A673 (cell line): ENCODE measurements at regions of chr2 and their contacts with region 1.

Region 1: DNA sequence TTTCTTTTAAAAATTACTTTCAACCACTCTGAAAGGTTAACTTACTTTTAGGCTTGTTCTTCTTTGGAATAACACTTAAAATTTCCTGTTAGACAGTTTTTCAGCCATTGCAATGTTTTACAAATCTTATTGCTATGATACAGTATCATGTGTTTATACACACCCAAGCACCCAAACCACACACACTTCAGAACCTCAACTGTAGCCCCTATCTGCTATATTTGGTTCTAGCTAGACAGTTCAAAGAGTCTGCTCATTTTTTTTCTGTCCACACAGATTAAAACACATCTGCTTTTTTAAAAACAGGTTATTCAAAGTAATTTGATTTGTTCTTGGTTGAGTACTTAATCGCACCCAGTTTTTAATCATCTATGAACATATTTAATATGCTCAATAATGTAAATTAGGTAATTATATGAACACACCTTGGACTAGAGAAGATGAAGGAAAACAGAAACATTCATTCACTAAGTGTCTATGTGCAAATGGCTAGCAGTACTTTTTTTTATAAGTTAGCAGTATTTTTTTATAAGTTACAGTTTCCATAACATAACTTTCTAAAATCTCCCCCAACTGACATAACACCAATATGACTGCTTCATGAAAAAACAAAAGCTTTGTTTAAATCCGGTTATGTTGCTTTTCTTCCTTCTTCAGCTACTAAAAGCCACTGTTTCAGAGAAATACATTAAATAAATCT is 17.6 kb downstream of the FBXO11 start:
- DNase-seq: no peak
- H3K4me3 ChIP-seq: no peak overlapping the region
- H3K27ac ChIP-seq: no peak overlapping the region
- H3K4me1 ChIP-seq: peaks cover 6% of the 10 kb centered on the region
- H3K27me3 ChIP-seq: no peaks in the 10 kb centered on the region
- CTCF ChIP-seq: no peak

Region 2: GRCh38 chr2:47782671-47783485 is 105.9 kb before region 1 on chr2 and contains the start of gene MSH6:
- CTCF ChIA-PET with region 1: no interaction called
- POLR2A ChIA-PET with region 1: no interaction called
- intact Hi-C with region 1: no loop called
- DNase-seq: peak; percentile 95
- H3K4me3 ChIP-seq: peak within 1 kb of the TSS; percentile 99
- H3K27ac ChIP-seq: peak within 1 kb of the TSS; percentile 99
- H3K4me1 ChIP-seq: peaks cover 4% of the 10 kb centered on the region
- H3K27me3 ChIP-seq: no peaks in the 10 kb centered on the region
- CTCF ChIP-seq: no peak
- total RNA-seq, gene MSH6: 182 and 189 TPM in 2 replicates

Region 3: DNA sequence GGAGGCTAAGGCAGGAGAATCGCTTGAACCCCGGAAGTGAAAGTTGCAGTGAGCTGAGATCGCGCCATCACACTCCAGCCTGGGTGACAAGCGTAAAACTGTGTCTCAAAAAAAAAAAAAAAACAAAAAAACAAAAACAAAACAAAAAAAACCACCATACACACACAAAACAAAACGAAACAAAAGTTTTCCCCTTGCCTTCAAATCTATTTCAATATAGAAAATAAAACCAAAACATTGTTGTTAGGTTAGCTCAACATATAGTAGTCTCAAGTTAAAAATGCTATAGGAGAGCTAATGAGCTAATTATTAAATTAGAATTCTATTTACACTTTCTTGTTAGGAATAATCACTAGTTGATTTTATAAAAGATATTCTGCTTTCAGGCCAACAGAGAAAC is 25.8 kb before region 1 on chr2:
- CTCF ChIA-PET with region 1: no interaction called
- POLR2A ChIA-PET with region 1: interaction called, 14 read pairs
- intact Hi-C with region 1: no loop called
- DNase-seq: no peak
- H3K4me3 ChIP-seq: no peak overlapping the region
- H3K27ac ChIP-seq: no peak overlapping the region
- H3K4me1 ChIP-seq: peaks cover 9% of the 10 kb centered on the region
- H3K27me3 ChIP-seq: no peaks in the 10 kb centered on the region
- CTCF ChIP-seq: no peak